ENCODE measurements at regions of chr4 and their contacts with region 1.

Region 1: DNA sequence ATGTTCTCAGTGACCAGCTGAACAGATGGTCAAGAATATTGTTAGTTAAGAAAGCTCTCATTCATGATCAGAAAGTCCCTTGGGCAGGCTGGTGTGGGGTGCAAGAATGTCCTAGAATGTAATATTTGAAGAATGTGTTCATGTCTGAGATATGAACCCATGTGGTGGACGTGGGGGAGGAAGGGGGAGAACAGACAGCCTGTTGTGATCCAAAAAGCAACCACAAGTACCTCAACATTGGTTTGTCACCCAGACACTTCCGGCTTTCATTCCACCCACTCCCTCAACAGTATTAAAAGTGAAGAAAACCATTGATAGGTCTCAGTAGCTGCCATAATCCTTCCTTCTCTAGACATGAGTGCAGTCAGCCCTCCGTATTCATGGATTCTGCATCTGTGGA is 82.2 kb downstream of the MAML3 start:
- DNase-seq: peak; percentile 89
- H3K4me3 Mint-ChIP-seq: peak overlapping the region; percentile 73
- H3K27ac Mint-ChIP-seq: peak overlapping the region; percentile 83
- H3K4me1 Mint-ChIP-seq: peaks cover 44% of the 10 kb centered on the region
- H3K27me3 Mint-ChIP-seq: peaks cover 41% of the 10 kb centered on the region

Region 2: DNA sequence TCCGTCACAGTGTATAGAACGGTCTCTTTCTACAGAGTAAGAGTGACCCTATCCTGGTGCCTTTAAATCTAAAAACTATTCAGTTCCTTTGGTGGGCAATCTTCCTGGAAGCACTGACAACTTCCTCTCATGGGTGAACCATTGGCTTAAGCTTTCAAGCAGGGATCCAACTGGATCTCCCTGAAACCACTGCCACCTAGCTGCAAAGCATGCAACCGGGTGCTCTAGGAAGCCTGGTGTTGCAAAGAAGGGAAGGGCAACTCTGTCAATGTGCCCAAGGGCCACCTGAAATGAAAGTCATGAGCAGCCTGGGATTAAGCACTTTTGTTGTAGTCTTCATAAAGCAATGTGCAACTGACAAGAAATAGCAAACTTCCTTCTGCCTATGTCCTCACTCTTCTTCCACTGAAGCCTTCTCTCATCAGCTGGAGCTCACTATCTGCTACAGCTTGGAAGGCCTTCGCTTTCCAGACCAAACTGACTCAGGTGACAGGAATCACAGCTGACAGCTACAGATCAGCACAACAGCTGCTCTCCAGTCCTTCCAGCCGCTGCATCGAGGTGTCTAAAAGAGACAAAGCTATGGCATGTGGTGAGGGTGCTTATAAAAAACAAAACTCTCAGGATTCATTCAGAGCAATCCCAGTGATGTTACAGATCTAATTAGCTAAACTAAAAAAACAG is 561.9 kb before region 1 on chr4:
- intact Hi-C with region 1: no loop called
- DNase-seq: no peak
- H3K4me3 Mint-ChIP-seq: no peak overlapping the region
- H3K27ac Mint-ChIP-seq: no peak overlapping the region
- H3K4me1 Mint-ChIP-seq: peaks cover 2% of the 10 kb centered on the region
- H3K27me3 Mint-ChIP-seq: no peaks in the 10 kb centered on the region

Region 3: DNA sequence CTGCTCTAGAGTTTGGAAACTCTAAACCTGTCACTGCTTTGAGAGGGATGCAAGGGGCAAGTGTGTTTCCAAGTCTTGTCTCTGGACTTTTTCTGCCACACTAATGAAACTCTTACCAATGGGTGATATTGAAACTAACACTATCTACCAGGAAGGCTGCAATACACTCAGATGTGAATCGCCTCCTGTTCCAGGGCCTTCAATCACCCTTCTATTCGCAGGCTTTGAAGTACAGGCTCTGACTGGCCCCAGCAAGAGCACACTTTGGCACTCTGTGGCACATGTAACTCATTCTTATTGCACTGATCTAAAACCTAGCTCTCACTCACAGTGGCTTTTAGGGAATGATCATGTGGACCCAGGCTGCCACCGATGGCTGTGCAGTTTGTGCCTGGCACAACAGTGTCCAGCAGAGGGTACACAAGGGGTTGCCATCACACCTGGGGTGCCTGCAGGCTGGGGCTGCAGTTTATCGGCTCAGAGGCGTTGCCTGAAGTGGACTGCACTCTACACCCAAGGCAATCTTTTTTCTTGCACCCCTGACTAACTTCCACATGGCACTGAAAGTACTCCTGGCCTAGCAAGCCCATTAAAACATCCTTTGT is 195.4 kb before region 1 on chr4:
- intact Hi-C with region 1: no loop called
- DNase-seq: no peak
- H3K4me3 Mint-ChIP-seq: no peak overlapping the region
- H3K27ac Mint-ChIP-seq: no peak overlapping the region
- H3K4me1 Mint-ChIP-seq: peaks cover 8% of the 10 kb centered on the region
- H3K27me3 Mint-ChIP-seq: peaks cover 8% of the 10 kb centered on the region

Region 4: DNA sequence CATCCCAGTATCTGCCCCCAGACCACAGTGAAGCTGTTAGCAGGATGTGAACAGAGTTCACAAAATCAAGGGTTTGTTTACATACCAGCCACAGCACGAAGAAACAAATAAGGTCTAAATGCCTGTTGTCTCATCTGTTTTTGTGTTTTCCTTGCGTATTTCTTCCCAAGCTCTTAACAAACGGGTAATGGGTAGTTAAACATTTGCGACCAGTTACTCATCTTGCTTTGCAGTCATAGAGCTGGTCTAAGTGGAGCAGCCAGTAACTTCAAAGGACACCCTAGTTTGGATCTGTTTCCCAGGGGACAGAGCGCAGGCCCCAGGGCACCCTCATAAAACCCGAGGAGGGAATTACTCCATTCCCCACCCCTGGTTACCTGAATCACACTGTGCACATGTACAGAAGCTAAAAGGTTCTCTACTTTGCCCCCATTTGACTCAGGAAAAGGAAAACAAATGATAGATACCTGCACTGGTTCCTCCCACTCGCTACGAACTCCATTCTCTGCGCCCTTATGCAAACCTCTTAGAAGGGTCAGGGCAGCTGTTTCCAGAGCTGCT is 13.3 kb after region 1 on chr4:
- intact Hi-C with region 1: loop called (anchors 1 kb)
- DNase-seq: no peak
- H3K4me3 Mint-ChIP-seq: no peak overlapping the region
- H3K27ac Mint-ChIP-seq: no peak overlapping the region
- H3K4me1 Mint-ChIP-seq: peaks cover 7% of the 10 kb centered on the region
- H3K27me3 Mint-ChIP-seq: peaks cover 53% of the 10 kb centered on the region

Region 5: GRCh38 chr4:140186651-140187315 is 115.0 kb after region 1 on chr4:
- intact Hi-C with region 1: no loop called
- DNase-seq: no peak
- H3K4me3 Mint-ChIP-seq: no peak overlapping the region
- H3K27ac Mint-ChIP-seq: no peak overlapping the region
- H3K4me1 Mint-ChIP-seq: no peaks in the 10 kb centered on the region
- H3K27me3 Mint-ChIP-seq: peaks cover 42% of the 10 kb centered on the region